Cardiac septum (tissue), 1 donor: ENCODE measurements at regions of chr3 and their contacts with region 1.

Region 1: GRCh38 chr3:169149349-169149890 is 514.1 kb downstream of the MECOM start:
- DNase-seq: peak; percentile 91

Region 2: DNA sequence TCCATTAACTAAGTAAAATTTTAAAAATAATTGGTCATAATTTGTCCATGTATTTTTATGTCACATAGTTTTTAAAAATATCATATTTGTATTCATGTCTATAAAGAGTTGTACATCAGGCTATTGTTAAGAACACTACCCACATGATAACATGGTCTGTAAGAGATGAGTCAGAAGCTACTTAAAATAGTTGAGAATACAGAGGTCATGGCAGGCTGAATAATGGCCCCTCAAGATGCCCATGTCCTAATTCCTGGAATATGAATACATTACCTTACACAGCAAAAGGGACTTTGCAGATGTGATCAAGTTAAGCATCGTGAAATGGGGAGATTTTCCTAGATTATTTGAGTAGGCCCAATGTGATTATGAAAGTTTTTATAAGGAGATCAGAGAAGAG is 270.8 kb before region 1 on chr3:
- intact Hi-C with region 1: loop called (anchors 10 kb)
- DNase-seq: no peak

Region 3: GRCh38 chr3:169227911-169228310 is 78.5 kb after region 1 on chr3:
- intact Hi-C with region 1: loop called (anchors 5 kb)
- DNase-seq: no peak

Region 4: DNA sequence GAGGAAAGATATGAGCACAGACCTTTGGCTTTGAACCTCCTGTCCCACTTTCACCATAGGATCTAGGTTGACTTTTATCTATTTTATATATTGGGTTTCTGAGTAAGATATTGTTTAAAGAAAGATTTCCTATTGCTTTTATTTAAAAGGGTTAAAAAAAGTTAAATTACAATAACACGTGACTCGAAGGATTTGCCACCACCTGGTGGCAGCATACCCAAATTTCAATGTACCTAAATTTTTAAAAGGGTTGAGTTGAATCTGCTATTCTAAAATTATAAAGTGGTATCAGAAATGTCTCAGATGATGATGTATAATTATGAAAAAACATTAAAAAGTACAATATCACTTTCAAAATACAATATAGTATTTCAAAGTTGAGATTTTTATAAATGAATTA is 145.7 kb after region 1 on chr3:
- intact Hi-C with region 1: loop called (anchors 10 kb)
- DNase-seq: no peak

Region 5: GRCh38 chr3:169387751-169388696 is 238.6 kb after region 1 on chr3:
- intact Hi-C with region 1: loop called (anchors 5 kb)
- DNase-seq: peak; percentile 81

Region 6: DNA sequence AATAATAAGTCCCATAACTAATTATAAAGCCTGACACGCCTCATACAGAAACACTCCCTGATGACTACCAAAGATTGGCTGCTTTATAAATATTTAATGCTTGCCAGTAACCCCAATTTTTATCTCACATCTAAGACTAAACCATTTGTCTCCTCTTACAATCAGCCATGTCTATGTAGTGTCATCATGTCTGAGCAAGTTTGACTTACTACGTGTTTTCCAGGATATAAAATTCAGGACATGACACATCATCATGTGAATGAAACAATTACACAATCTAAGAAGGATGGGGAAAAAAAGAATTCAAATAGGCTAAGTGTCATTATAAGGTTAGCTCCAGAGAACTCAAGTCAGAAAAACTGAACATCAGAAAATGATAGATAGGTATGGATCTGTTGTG is 305.4 kb after region 1 on chr3:
- intact Hi-C with region 1: loop called (anchors 10 kb)
- DNase-seq: no peak

Region 7: DNA sequence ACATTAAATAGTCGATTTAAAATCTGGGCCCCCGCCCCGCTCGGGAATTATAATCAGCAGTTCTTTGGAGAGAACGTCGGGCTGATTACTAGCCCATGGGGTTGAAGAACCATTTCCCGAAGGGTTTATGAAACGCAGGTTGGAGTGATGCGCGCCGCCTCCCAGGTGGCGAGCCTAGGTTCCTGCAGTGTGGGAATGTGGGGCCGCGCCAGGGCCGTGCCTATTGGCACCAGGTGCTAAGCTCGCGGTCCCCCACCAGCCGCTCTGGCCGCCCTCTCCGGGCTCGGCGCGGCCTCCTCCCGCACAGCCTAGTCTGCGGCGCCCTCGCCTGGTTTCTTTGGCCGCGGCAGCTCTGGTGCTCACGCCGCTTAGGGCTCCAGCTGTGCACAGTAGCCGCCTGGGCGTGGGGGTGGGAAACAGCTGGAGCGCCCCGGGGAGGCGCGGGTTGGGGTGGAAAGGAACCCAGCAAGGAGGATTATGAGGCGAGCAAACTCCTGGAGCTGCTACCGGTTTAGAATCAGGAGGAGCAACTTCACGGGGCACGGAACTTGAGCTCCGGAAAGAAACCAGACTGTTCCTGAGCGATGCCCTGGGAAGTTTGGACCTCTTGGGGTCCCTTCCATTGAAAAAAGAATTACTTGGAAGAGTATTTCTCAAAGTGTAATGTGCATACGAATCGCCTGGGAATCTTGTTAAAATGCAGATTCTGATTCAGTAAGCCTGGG is 519.7 kb after region 1 on chr3:
- intact Hi-C with region 1: loop called (anchors 2 kb)
- DNase-seq: peak; percentile 85